ENCODE measurements at regions of chr11 and their contacts with region 1.

Region 1: GRCh38 chr11:133834682-133835592 is 10.4 kb downstream of the SPATA19 start:
- DNase-seq: peak; percentile 79
- ATAC-seq: peak; percentile 77
- H3K4me3 Mint-ChIP-seq: no peak overlapping the region
- H3K27ac Mint-ChIP-seq: no peak overlapping the region
- H3K4me1 Mint-ChIP-seq: peaks cover 13% of the 10 kb centered on the region
- H3K27me3 Mint-ChIP-seq: no peaks in the 10 kb centered on the region

Region 2: DNA sequence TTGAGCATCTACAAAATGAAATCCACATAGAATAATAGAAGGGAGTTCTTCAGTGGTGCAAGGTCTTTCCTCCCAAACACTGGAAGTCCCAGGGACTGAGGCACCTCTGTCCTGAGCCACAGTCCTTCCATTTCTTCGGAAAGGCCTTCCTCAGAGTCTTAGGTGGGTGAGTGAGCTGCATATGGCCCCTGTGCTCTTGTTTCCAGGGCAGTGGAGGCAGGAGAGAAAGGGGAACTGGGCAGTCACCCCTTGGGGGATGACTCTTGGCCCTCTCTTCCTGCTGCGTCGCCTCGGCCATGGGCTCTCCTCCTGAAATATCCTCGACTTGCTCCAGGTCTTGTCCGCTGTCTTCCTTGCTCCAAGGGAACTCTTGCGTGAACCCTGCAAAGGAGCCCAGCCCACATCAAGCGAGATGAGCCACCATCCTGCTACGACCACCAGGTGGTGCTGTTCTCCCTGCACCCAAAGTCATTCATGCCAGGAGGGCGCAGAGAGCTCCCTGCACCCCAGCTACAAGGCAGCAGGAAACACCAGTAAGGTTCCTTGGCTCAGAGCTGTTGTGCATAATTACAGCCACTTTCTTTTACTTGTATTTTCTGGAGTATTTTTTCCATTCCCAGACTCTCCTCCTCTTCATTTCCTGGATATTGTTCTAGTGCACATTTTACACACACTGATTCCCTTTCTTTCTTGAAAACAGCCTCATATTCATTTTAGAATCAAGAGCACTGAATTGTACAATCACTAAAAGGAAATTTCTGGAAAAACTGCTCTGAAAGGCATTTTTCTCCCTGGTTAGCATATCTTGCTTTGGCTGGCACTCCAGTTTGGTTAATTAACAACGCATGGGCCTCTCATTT is 700.4 kb before region 1 on chr11:
- CTCF ChIA-PET with region 1: interaction called, 62 read pairs
- POLR2A ChIA-PET with region 1: no interaction called
- DNase-seq: peak; percentile 66
- ATAC-seq: peak; percentile 79
- H3K4me3 Mint-ChIP-seq: no peak overlapping the region
- H3K27ac Mint-ChIP-seq: no peak overlapping the region
- H3K4me1 Mint-ChIP-seq: no peaks in the 10 kb centered on the region
- H3K27me3 Mint-ChIP-seq: peaks cover 3% of the 10 kb centered on the region

Region 3: DNA sequence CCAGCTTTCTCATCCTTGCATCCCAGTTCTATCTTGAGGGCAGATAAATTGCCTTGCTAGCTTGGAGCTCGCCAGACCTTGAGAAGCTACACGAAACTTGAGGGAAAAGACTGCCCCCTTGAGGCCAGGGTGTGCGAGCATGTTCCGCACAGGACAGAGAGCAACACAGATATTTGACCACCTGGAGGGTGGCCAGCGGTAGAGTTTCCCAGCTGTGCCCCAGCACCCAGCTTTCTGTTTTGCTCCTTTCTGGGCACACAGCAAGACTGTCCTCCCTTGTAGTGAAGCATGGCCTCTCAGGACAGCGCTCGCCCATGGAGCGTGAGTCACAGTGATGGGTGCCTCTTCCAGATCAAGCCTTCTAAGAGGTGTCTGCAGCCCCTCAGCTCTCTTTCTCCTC is 13.2 kb before region 1 on chr11:
- CTCF ChIA-PET with region 1: interaction called, 17 read pairs
- POLR2A ChIA-PET with region 1: no interaction called
- DNase-seq: peak; percentile 54
- ATAC-seq: peak; percentile 15
- H3K4me3 Mint-ChIP-seq: no peak overlapping the region
- H3K27ac Mint-ChIP-seq: no peak overlapping the region
- H3K4me1 Mint-ChIP-seq: no peaks in the 10 kb centered on the region
- H3K27me3 Mint-ChIP-seq: peaks cover 6% of the 10 kb centered on the region